ENCODE measurements at regions of chr11 and their contacts with region 1.

Region 1: GRCh38 chr11:93234602-93235207 is 36.9 kb upstream of the SLC36A4 start:
- DNase-seq: peak; percentile 81 to 82
- H3K4me3 ChIP-seq: no peak overlapping the region
- H3K27ac ChIP-seq: no peak overlapping the region
- H3K4me1 ChIP-seq: no peaks in the 10 kb centered on the region
- H3K27me3 ChIP-seq: peaks cover 0 to 16% of the 10 kb centered on the region in 2 donors
- CTCF ChIP-seq: peak; percentile 92 to 96

Region 2: DNA sequence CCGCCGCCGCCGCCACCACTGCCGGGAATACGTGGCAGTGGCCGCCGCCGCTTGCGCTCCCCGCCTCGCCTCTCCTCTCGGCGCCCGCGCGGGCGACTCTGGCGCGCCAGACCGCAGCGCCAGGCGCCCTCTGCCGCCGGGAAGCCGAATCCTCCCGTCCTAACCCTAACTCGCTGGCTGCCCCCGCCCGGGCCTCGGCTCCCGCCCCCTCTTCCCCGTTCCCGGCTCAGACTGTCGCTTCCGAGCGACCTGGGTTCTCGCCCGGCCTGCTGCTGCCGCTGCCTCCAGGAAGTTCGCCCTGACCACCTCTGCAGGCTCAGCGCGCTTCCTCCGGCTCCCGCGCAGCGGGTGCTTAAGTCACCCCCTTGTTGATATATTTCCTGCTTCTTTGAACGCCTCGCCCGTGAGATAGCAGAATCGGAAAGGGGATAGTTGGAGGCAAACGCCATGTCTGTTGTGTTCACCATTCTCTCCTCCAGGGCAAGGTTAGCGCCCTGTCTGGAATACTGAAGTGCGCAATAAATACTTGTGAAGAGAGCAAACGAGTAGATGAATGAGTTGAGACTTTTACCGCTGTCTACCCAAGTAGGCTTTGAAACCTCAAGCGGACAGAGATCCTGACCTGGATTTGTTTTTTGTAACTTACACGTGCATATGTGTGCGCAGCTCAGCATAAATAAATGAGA is 308.7 kb after region 1 on chr11 and contains the start of gene SMCO4:
- intact Hi-C with region 1: loop called (anchors 2 kb)
- DNase-seq: peak; percentile 71 to 89
- H3K4me3 ChIP-seq: peak within 1 kb of the TSS; percentile 94 to 95
- H3K27ac ChIP-seq: peak within 1 kb of the TSS; percentile 92 to 96
- H3K4me1 ChIP-seq: peaks cover 0 to 28% (median 15%) of the 10 kb centered on the region in 4 donors
- H3K27me3 ChIP-seq: no peaks in the 10 kb centered on the region
- CTCF ChIP-seq: peak; percentile 78 to 79

Region 3: GRCh38 chr11:93652161-93652597 is 417.5 kb after region 1 on chr11:
- intact Hi-C with region 1: loop called (anchors 2 kb)
- DNase-seq: no peak
- H3K4me3 ChIP-seq: no peak overlapping the region
- H3K27ac ChIP-seq: no peak overlapping the region
- H3K4me1 ChIP-seq: no peaks in the 10 kb centered on the region
- H3K27me3 ChIP-seq: peaks cover 0 to 15% of the 10 kb centered on the region in 2 donors
- CTCF ChIP-seq: peak; percentile 71 to 75